T-cell (primary cell): ENCODE measurements at regions of chr1 and their contacts with region 1.

Region 1: DNA sequence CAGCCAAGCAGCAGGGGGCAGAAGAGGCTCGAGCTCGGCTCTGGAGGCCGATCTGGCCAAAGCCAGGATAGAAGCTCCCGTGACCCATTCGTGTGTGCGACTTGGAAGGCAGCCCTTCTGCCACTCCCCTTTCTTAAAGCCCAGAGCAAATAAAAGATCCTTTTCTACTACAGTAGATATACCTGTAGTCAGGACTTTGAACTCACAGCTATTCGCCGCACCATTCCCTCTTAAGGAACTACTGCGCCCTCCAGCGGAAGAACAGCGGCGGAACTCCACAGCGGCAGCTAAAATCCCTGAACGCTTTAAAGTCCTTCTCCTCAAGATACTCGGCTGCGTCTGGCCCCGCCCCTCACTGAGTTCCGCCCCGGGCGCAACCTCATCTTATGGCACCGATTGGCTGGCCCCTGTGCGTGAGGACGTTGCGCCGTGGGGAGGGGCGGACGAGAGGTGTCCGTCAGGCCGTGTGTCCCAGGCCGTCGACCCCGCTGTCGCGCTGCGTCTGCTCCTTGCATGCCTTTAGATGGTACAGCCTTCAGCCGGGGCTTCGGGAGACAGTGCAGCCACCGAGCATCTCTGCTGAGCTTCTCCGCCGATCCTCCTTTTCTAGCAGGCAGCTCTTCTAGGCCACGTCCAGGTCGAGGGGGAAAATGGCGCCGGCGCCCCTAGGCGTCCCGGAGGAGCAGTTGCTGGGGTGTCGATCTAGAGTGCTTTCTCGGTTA is at the start of gene LRIG2:
- DNase-seq: peak; percentile 93 to 99 (median 98)
- ATAC-seq: peak; percentile 96 to 99 (median 98)
- H3K4me3 ChIP-seq: peak within 1 kb of the TSS; percentile 82 to 94
- H3K4me3 Mint-ChIP-seq: peak within 1 kb of the TSS; percentile 97 to 99 (median 97)
- H3K27ac ChIP-seq: peak within 1 kb of the TSS; percentile 67
- H3K27ac Mint-ChIP-seq: peak within 1 kb of the TSS; percentile 92 to 97
- H3K4me1 ChIP-seq: peaks cover 14 to 31% of the 10 kb centered on the region in 2 experiments
- H3K4me1 Mint-ChIP-seq: peaks cover 34 to 39% (median 37%) of the 10 kb centered on the region in 3 donors
- H3K27me3 ChIP-seq: no peaks in the 10 kb centered on the region
- H3K27me3 Mint-ChIP-seq: no peaks in the 10 kb centered on the region
- total RNA-seq, gene LRIG2: 19.5 to 25.4 (median 20.4) TPM

Region 2: DNA sequence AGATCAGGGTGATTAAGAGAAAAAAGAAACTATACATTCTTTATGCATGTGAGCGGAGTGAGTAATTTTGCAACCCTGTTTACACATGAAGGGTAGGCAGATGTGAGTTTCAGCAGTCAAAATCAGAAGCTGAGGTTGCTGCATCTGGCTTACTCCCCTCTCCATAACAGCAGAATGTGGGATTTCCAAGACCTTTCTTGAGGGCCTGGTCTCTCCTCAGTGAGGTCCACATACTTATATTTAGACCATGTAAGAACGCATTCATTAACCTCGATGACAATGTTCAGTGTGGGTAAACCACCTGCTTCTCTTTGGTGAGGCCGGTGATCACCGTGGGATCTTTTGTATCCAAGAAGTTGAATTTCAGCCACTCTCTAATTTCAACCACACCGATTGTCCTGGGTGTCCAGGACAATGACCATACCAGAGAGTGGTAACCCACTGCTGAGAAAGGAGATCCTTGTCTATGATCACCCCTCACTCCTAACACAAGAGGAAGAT is 1472.0 kb before region 1 on chr1:
- CTCF ChIA-PET with region 1: no interaction called
- POLR2A ChIA-PET with region 1: no interaction called
- DNase-seq: no peak
- ATAC-seq: no peak
- H3K4me3 ChIP-seq: no peak overlapping the region
- H3K4me3 Mint-ChIP-seq: peak overlapping the region in 1 of 3 donors; percentile 50
- H3K27ac ChIP-seq: peak overlapping the region; percentile 2
- H3K27ac Mint-ChIP-seq: peak overlapping the region; percentile 81 to 87
- H3K4me1 ChIP-seq: peaks cover 64 to 88% of the 10 kb centered on the region in 2 experiments
- H3K4me1 Mint-ChIP-seq: peaks cover 87 to 99% (median 96%) of the 10 kb centered on the region in 3 donors
- H3K27me3 ChIP-seq: no peaks in the 10 kb centered on the region
- H3K27me3 Mint-ChIP-seq: no peaks in the 10 kb centered on the region

Region 3: GRCh38 chr1:112715264-112716053 is 357.5 kb before region 1 on chr1 and contains the start of gene PPM1J:
- CTCF ChIA-PET with region 1: interaction called, 12 to 22 read pairs
- POLR2A ChIA-PET with region 1: interaction called in 1 of 2 experiments, 3 read pairs
- DNase-seq: peak; percentile 72 to 98 (median 87)
- ATAC-seq: peak; percentile 83 to 85 (median 84)
- H3K4me3 ChIP-seq: peak within 1 kb of the TSS; percentile 55 to 83
- H3K4me3 Mint-ChIP-seq: peak within 1 kb of the TSS; percentile 84 to 87 (median 86)
- H3K27ac ChIP-seq: no peak within 1 kb of the TSS
- H3K27ac Mint-ChIP-seq: peak within 1 kb of the TSS in 1 of 2 donors; percentile 34
- H3K4me1 ChIP-seq: peaks cover 6 to 31% of the 10 kb centered on the region in 2 experiments
- H3K4me1 Mint-ChIP-seq: peaks cover 19 to 31% (median 20%) of the 10 kb centered on the region in 3 donors
- H3K27me3 ChIP-seq: peaks cover 2 to 47% of the 10 kb centered on the region in 2 experiments
- H3K27me3 Mint-ChIP-seq: peaks cover 6 to 11% of the 10 kb centered on the region in 2 donors
- total RNA-seq, gene PPM1J: 0.15 to 0.77 (median 0.38) TPM

Region 4: DNA sequence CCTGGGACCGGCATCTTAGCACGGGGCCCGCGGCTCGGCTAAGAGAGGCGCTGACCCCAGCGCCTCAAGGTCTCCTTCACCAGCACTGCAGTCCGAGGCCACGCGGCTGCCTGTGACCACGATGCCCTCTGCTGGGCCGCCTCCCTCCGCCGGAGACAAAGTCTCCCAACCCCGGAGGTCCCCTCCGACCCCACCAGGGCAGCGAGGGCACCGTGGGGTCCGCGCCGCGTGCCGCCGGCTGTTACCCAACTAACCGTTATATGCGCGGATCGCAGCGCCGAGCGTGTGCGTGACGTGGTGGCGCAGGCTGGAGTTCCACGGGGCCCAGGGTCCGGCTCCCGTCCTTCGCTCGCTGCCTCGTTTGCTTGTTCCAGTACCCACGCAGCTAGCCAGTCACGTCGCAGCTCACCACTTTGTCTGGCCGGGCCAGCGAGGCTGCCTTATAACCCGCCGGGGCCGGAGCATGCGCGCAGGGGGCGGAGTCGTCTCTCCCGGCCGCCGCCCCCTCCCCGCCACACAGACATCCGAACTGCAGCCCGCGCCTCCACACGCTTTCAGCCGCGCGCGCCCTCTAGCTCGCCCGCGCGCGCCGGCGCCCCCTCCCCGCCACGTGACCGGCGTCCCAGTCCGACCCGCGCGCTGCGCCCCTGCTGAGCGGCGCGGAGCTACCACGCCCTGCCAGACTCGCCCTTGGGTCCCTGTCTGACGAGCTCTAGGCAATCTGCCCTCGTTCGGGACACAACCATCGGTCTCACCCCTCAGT is 117.0 kb before region 1 on chr1 and contains the start of gene SLC16A1:
- CTCF ChIA-PET with region 1: interaction called, 4 to 19 read pairs
- POLR2A ChIA-PET with region 1: interaction called in 1 of 2 experiments, 3 read pairs
- DNase-seq: peak; percentile 70 to 91 (median 83)
- ATAC-seq: peak; percentile 86 to 88 (median 86)
- H3K4me3 ChIP-seq: peak within 1 kb of the TSS; percentile 89 to 96
- H3K4me3 Mint-ChIP-seq: peak within 1 kb of the TSS; percentile 96 to 99 (median 97)
- H3K27ac ChIP-seq: peak within 1 kb of the TSS; percentile 85
- H3K27ac Mint-ChIP-seq: peak within 1 kb of the TSS; percentile 83 to 90
- H3K4me1 ChIP-seq: peaks cover 14 to 30% of the 10 kb centered on the region in 2 experiments
- H3K4me1 Mint-ChIP-seq: peaks cover 59 to 61% (median 59%) of the 10 kb centered on the region in 3 donors
- H3K27me3 ChIP-seq: no peaks in the 10 kb centered on the region
- H3K27me3 Mint-ChIP-seq: no peaks in the 10 kb centered on the region
- total RNA-seq, gene SLC16A1: 13.3 to 23.2 (median 20.3) TPM

Region 5: DNA sequence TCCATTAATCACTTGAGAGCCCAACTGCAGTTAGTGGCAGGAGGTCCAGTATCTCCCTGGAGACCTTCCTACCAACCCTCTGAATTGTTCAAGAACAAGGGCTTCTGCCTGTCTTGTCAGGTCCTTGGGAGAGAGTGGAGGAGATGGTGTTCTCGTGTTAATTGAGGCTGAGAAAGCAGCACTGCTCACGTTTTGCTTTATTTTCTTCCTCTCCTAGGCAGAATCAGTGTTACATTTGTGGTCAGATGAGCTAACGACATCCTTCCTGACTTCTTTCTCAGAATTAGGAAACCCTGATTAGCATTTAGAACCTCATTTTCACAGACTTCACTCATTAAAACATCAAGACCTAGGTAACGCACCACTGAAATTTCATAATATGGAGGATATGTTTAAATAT is 26.3 kb before region 1 on chr1:
- CTCF ChIA-PET with region 1: interaction called, 6 to 12 read pairs
- POLR2A ChIA-PET with region 1: no interaction called
- DNase-seq: peak in 3 of 35 experiments; percentile 1 to 43 (median 13)
- ATAC-seq: peak; percentile 73 to 91 (median 82)
- H3K4me3 ChIP-seq: no peak overlapping the region
- H3K4me3 Mint-ChIP-seq: peak overlapping the region in 2 of 3 donors; percentile 22 to 66
- H3K27ac ChIP-seq: peak overlapping the region; percentile 59
- H3K27ac Mint-ChIP-seq: peak overlapping the region; percentile 78 to 94
- H3K4me1 ChIP-seq: peaks cover 13 to 42% of the 10 kb centered on the region in 2 experiments
- H3K4me1 Mint-ChIP-seq: peaks cover 44 to 55% (median 45%) of the 10 kb centered on the region in 3 donors
- H3K27me3 ChIP-seq: no peaks in the 10 kb centered on the region
- H3K27me3 Mint-ChIP-seq: peaks cover 0 to 1% of the 10 kb centered on the region in 2 donors

Region 6: DNA sequence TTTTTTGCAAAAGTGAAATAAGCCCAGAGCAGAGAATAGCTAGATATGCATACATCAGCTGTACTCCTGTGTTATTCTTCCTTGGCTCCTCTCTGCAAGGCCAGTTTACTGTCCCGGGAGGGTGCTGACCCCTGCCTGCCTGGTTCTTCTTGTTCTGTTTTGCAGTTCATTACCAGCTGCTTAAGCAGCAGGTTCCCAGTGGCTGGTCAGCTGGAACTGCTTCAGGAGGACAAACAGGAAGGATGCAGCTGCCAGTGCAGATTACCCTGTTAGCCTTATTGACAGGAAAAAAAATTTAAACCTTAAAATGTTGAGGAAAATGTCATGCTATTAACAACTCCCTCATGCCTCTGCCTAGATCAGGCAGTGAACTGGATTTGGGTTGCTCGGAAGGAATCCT is 15.9 kb before region 1 on chr1:
- CTCF ChIA-PET with region 1: interaction called, 11 to 20 read pairs
- POLR2A ChIA-PET with region 1: interaction called in 1 of 2 experiments, 3 read pairs
- DNase-seq: no peak
- ATAC-seq: no peak
- H3K4me3 ChIP-seq: no peak overlapping the region
- H3K4me3 Mint-ChIP-seq: no peak overlapping the region
- H3K27ac ChIP-seq: no peak overlapping the region
- H3K27ac Mint-ChIP-seq: no peak overlapping the region
- H3K4me1 ChIP-seq: no peaks in the 10 kb centered on the region
- H3K4me1 Mint-ChIP-seq: peaks cover 3 to 8% (median 8%) of the 10 kb centered on the region in 3 donors
- H3K27me3 ChIP-seq: no peaks in the 10 kb centered on the region
- H3K27me3 Mint-ChIP-seq: no peaks in the 10 kb centered on the region

Region 7: DNA sequence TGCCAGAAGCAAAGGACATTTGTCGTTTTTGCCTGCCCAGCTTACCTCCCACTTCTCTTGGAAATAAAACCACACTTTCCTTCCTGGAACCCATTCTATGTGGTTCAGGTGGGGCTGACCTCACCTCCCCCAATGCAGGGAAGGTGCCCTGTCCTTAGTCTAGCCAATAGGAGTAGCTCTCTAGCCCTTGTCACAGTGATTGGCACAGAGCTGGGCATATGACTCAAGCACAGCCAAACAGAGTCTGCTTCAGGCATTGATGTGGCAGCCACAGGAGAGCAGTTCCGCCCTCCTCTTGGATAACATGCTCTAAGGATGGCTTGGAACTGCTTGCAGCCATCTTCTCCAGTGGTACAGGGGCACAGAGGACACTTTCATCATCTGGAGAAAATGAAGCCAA is 134.1 kb after region 1 on chr1:
- CTCF ChIA-PET with region 1: no interaction called
- POLR2A ChIA-PET with region 1: no interaction called
- DNase-seq: no peak
- ATAC-seq: no peak
- H3K4me3 ChIP-seq: no peak overlapping the region
- H3K4me3 Mint-ChIP-seq: no peak overlapping the region
- H3K27ac ChIP-seq: no peak overlapping the region
- H3K27ac Mint-ChIP-seq: no peak overlapping the region
- H3K4me1 ChIP-seq: peaks cover 0 to 2% of the 10 kb centered on the region in 2 experiments
- H3K4me1 Mint-ChIP-seq: no peaks in the 10 kb centered on the region
- H3K27me3 ChIP-seq: peaks cover 0 to 18% of the 10 kb centered on the region in 2 experiments
- H3K27me3 Mint-ChIP-seq: peaks cover 33 to 44% of the 10 kb centered on the region in 2 donors

Region 8: DNA sequence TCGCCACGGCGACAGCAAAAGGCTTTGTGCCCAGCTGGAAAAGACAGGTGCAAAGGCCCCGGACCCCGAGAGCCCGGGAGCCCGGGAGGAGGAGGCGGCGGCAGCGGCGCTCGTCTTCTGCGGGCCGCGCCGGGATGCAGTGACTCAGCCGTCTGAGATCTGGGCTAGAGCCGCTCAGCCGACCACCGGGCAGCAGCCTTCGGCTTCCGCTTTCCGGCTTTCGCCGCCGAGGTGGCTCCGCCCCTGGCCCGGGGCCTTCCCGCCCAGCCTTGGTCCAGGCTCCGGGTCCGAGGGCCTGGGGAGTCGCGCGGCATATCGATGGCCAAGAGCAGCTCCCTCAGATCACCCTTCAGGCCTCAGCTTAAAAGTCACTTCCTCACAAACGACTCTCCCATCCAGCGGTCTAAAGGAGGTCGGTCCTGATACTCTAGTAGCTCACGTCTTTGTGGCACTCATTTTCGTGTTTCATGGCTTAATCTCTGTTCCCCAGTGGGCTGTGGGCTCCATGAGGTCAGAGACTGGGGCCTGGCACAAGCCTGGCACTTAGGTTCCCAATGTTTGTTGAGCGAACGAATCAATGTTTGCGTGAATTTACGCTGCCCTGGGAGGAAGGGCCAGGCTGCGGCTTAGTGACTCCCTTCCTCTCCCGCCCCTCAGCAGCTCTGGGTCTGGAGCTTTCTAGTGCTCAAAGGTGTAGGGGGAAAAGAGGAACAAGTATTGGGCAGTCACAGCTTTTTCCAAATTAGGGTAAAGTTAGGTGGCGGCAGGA is 686.6 kb after region 1 on chr1 and contains the start of gene PHTF1:
- CTCF ChIA-PET with region 1: interaction called, 5 to 11 read pairs
- POLR2A ChIA-PET with region 1: no interaction called
- DNase-seq: peak in 33 of 35 experiments; percentile 3 to 67 (median 28)
- ATAC-seq: peak; percentile 66 to 79 (median 76)
- H3K4me3 ChIP-seq: peak within 1 kb of the TSS; percentile 77 to 89
- H3K4me3 Mint-ChIP-seq: peak within 1 kb of the TSS; percentile 87 to 90 (median 89)
- H3K27ac ChIP-seq: peak within 1 kb of the TSS; percentile 74
- H3K27ac Mint-ChIP-seq: peak within 1 kb of the TSS; percentile 95
- H3K4me1 ChIP-seq: peaks cover 2 to 15% of the 10 kb centered on the region in 2 experiments
- H3K4me1 Mint-ChIP-seq: peaks cover 12 to 27% (median 24%) of the 10 kb centered on the region in 3 donors
- H3K27me3 ChIP-seq: no peaks in the 10 kb centered on the region
- H3K27me3 Mint-ChIP-seq: no peaks in the 10 kb centered on the region
- total RNA-seq, gene PHTF1: 5.9 to 10.5 (median 9.2) TPM